BJ (cell line): ENCODE measurements at regions of chr1 and their contacts with region 1.

Region 1: GRCh38 chr1:208245185-208245705 is 1.1 kb upstream of the PLXNA2 start:
- DNase-seq: peak; percentile 58
- H3K4me3 ChIP-seq: no peak overlapping the region; the same call in 1 of the 2 replicates
- H3K27me3 ChIP-seq: peaks cover 1% of the 10 kb centered on the region; the same call in 1 of the 2 replicates
- CTCF ChIP-seq: peak; percentile 76

Region 2: DNA sequence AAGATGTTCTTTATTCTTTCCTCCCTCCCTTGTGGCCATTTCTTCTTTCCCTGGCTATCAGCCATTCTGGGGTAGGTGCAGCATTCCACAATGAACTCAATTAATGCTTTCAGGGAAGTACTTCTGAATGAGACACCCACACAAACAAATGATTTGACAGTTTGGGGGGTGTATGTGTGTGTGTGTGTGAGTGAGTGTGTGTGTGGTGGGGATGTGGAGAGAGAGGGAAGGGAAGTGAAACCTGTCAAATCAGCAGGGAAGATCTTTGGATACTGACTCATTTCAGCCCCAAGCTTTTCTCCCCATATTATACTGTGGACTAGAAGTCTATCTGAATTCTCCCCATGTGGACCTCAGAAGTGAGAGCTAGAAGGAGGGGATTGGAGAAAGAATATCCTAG is 179.4 kb before region 1 on chr1:
- CTCF ChIA-PET with region 1: no interaction called
- POLR2A ChIA-PET with region 1: no interaction called
- DNase-seq: no peak
- H3K4me3 ChIP-seq: no peak overlapping the region
- H3K27me3 ChIP-seq: no peaks in the 10 kb centered on the region
- CTCF ChIP-seq: no peak

Region 3: DNA sequence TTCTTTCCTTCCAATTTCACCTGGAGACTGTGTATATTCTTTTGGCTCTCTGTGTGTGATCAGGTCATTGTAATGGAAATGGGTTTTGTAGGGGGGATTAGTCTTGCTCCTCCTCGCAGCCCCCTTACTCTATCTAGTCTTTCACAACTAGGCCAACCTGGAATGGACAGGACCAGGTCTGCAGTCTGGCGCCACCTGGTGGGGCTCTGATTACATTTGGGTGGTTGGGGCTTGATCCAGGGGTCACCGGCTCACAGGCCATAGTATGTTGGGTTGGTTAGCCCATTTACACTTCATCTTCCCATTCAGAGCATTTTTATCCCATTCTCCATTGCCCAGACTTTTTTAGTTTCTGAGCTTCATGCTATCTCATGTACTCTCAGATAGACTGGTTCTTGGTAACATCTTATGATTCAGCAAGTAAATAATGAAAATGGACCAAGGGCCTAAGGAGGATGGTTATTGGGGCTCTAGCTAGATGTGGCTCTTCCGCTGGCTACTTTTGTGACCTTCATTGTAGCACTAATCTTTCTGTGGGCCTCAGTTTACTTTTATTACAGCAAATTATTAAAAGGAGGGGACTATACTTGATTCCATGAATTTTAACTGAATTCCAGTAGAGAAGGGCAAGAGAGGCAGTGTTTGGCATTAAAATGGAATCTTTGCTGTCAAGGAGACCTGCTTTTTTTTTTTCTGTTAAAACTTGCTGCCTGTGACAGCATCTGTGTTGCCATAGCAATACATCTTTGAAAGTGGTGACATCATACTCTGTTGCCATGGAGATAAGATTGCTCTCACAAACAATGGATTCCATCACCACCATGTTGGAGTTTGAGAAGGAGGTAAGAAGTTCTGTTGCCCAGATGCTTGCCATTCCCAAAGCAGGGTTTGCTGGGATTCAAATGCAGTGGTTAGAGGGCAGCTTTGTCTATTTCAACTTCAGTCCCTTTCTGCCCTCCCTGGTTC is 151.2 kb before region 1 on chr1:
- CTCF ChIA-PET with region 1: interaction called, 12 read pairs
- POLR2A ChIA-PET with region 1: no interaction called
- DNase-seq: peak; percentile 31
- H3K4me3 ChIP-seq: no peak overlapping the region
- H3K27me3 ChIP-seq: no peaks in the 10 kb centered on the region
- CTCF ChIP-seq: peak; percentile 87

Region 4: DNA sequence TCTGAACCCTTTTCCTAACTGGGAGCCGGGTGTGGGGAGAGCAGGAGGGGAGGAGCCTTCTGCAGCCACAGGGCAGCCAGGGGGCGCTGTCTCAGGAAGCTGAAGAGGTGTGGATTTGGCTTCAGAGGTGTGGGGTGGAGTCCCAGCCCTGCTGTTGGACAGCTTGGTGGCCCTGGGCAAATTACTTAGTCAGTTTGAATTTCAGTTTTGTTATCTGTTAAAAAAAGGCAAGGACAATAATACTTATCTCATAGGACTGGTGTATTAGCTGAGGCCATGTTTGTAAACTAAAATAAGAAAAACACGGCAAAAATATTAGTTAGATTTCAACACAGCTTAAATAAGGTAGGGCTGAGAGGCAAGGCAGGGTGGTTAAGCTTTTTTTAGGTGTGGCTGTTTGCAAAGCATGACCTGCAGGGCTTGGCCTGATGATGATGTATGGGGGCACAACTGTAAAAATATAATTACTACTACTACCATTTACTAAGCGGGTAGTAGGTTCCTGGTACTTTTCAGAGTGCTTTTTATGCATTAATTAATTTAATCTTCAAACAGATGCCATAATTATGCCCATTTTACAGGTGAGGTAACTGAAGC is 112.9 kb before region 1 on chr1:
- CTCF ChIA-PET with region 1: interaction called, 151 read pairs
- POLR2A ChIA-PET with region 1: interaction called, 3 read pairs
- DNase-seq: peak; percentile 9
- H3K4me3 ChIP-seq: no peak overlapping the region
- H3K27me3 ChIP-seq: no peaks in the 10 kb centered on the region
- CTCF ChIP-seq: peak; percentile 94

Region 5: GRCh38 chr1:208219659-208220282 is 25.5 kb before region 1 on chr1:
- CTCF ChIA-PET with region 1: interaction called, 12 read pairs
- POLR2A ChIA-PET with region 1: no interaction called
- DNase-seq: peak; percentile 56
- H3K4me3 ChIP-seq: no peak overlapping the region
- H3K27me3 ChIP-seq: no peaks in the 10 kb centered on the region
- CTCF ChIP-seq: no peak

Region 6: GRCh38 chr1:208291923-208292711 is 46.9 kb after region 1 on chr1:
- CTCF ChIA-PET with region 1: no interaction called
- POLR2A ChIA-PET with region 1: no interaction called
- DNase-seq: no peak
- H3K4me3 ChIP-seq: no peak overlapping the region
- H3K27me3 ChIP-seq: no peaks in the 10 kb centered on the region
- CTCF ChIP-seq: no peak